ENCODE measurements at regions of chr3 and their contacts with region 1.

Region 1: DNA sequence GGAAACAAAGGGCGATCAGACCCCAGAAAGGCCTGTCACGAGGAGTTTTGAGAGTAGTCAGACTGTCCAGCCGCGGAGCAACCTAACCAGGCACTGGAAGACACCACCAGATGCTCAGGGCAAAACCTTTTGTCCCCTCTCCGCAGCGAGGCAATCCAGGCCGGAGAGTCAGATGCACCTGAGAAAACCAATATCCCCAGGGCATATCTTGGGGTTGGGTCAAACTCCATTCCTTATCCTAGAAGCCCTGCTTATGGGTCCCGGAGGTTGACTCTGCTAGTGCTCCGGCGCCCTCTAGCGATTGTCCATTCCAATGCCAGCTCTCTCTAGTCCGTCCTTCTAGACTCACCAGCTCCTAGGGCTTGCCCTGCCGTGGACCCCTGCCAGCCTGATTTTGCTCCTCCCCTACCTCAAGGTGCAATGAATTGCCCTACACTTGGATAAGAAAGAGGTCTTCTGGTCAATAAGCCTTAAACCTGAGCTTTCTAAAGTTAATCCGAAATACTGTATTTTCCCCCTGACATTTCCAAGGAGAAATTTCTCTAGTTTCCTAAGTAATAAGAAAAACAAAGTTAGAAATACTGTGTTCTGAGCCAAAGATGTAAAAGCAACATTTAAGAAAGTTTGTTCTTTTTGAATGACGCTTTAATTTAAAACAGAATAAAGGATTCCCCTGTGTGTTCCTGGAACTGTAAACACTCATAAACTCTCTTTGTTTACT is 5.5 kb downstream of the CPNE4 start:
- DNase-seq: peak; percentile 84
- ATAC-seq: peak; percentile 65
- H3K4me3 Mint-ChIP-seq: no peak overlapping the region
- H3K27ac Mint-ChIP-seq: no peak overlapping the region
- H3K4me1 Mint-ChIP-seq: peaks cover 3% of the 10 kb centered on the region
- H3K27me3 Mint-ChIP-seq: peaks cover 47% of the 10 kb centered on the region
- CTCF ChIP-seq: peak; percentile 73

Region 2: DNA sequence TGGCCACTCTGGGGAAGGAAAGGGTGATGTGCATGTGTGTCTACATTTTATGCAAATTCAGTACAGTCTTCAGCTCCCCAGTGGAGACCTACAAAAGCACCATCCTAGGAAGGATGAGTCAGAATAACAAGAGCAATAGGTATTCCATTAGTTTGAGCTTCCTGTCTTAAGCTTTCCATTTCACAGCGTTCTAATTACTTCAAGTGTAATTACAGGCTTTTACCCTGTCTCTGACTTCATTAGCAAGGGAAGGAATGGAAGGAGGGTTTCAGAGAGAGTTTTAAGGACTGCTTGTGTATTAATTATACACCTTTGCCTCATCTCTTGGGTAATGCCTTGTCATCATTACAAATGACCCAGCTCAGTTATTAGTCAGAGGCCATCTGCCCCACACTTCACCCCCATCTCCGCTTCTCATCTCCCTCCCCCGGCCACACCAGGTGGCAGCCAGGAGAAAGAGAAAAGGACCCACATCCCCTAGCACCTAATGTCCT is 323.7 kb before region 1 on chr3:
- CTCF ChIA-PET with region 1: no interaction called
- POLR2A ChIA-PET with region 1: no interaction called
- intact Hi-C with region 1: no loop called
- DNase-seq: no peak
- ATAC-seq: no peak
- H3K4me3 Mint-ChIP-seq: no peak overlapping the region
- H3K27ac Mint-ChIP-seq: no peak overlapping the region
- H3K4me1 Mint-ChIP-seq: no peaks in the 10 kb centered on the region
- H3K27me3 Mint-ChIP-seq: peaks cover 8% of the 10 kb centered on the region
- CTCF ChIP-seq: no peak

Region 3: DNA sequence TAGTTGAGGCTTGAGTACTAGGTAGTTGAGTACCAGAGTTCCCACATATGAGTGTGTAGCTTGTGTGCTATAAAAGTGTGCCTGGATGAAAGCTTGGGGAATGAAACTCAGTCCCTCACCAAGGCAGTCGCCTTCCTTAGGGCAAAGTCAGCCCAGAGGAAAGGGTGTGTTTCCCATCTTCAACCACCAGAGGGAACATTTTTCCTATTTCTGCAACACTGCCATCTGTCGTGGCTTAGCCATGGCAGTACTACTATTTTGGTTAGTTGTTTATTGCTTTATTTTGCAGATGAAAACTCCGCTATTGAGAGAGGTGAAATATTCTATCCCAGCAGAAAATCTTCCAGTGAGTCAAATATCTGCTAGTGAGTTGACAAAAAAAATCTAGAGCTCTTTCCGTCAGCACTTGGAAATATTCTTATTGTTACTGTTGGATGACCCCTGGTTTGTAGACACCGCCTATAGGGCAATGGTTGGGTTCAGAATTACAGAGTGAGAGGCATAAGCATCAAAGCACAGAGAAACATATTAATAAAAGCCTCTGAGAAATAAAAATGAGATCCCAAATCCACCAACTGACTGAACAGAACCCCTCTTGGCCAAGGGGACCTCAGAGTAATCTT is 234.5 kb before region 1 on chr3:
- CTCF ChIA-PET with region 1: interaction called, 21 read pairs
- POLR2A ChIA-PET with region 1: no interaction called
- intact Hi-C with region 1: loop called (anchors 5 kb)
- DNase-seq: peak; percentile 24
- ATAC-seq: peak; percentile 70
- H3K4me3 Mint-ChIP-seq: no peak overlapping the region
- H3K27ac Mint-ChIP-seq: no peak overlapping the region
- H3K4me1 Mint-ChIP-seq: peaks cover 7% of the 10 kb centered on the region
- H3K27me3 Mint-ChIP-seq: peaks cover 13% of the 10 kb centered on the region
- CTCF ChIP-seq: peak; percentile 83

Measured in activated CD8-positive, alpha-beta T cell treated with anti-CD3 and anti-CD28 coated beads for 36 hours (primary cell).